Astrocyte of the cerebellum (primary cell): ENCODE measurements at regions of chr3 and their contacts with region 1.

Region 1: GRCh38 chr3:25057379-25057778 is 370.7 kb upstream of the RARB start:
- DNase-seq: no peak
- H3K4me3 ChIP-seq: no peak overlapping the region
- CTCF ChIP-seq: no peak

Region 2: GRCh38 chr3:24929521-24929920 is 127.9 kb before region 1 on chr3:
- in situ Hi-C with region 1: no loop called
- DNase-seq: no peak
- H3K4me3 ChIP-seq: no peak overlapping the region
- CTCF ChIP-seq: no peak

Region 3: DNA sequence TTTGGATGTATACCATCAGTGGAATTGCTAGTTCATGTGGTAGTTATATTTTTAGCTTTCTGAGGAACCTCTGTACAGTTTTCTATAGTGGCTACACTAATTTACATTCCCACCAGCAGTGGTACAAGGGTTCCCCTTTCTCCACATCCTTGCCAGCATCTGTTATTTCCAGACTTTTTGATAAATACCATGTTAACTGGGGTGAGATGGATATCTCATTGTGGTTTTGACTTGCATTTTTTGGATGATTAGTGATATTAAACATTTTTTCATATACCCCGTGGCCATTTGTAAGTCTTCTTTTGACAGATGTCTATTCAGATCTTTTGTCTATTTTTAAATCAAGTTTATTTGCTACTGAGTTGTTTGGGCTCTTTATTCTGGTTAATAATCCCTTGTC is 84.9 kb before region 1 on chr3:
- in situ Hi-C with region 1: loop called (anchors 5 kb)
- DNase-seq: no peak
- H3K4me3 ChIP-seq: no peak overlapping the region
- CTCF ChIP-seq: no peak